ENCODE measurements at regions of chr7 and their contacts with region 1.

Region 1: DNA sequence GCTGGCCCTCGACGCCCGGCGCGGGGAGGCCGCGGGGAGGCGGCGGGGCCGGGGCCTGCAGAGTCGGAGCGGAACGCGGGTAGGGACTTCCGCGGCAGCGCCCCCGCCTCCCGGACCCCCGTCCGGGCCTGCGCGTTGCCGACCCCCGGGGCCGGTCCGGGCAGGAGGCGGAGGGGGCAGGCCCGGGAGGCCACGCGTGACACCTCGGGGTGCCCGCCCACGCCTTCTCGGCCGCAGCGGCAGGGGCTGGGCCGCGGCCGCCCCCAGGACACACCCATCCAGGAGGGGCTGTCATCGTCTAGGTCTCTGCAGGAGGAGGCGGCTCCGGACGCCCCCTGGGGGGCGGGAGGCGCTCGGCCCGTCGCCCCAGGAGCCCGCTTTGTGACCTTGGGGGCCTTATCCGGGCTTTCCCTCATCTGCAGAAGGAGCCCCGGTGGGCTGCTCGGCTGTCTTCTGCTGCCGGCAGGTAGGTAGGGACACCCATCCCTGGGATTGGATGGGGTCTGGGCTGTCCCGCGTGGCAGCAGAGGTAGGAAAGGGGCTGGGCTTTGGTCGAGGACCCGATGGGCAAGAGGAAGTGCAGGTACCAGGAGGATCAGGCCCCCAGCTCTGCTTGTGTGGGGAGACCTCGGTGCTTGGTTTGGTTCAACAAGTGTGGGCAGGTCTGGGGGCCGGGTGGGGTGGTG is 569 bp downstream of the ZNF316 start:
- DNase-seq: peak; percentile 86
- H3K4me3 Mint-ChIP-seq: peak overlapping the region; percentile 92
- H3K27ac Mint-ChIP-seq: peak overlapping the region; percentile 84
- H3K4me1 Mint-ChIP-seq: peaks cover 25% of the 10 kb centered on the region
- H3K27me3 Mint-ChIP-seq: no peaks in the 10 kb centered on the region

Region 2: GRCh38 chr7:6577365-6578113 is 60.1 kb before region 1 on chr7 and contains the start of gene ZDHHC4:
- intact Hi-C with region 1: loop called (anchors 5 kb)
- DNase-seq: peak; percentile 96
- H3K4me3 Mint-ChIP-seq: peak within 1 kb of the TSS; percentile 84
- H3K27ac Mint-ChIP-seq: peak within 1 kb of the TSS; percentile 90
- H3K4me1 Mint-ChIP-seq: peaks cover 18% of the 10 kb centered on the region
- H3K27me3 Mint-ChIP-seq: peaks cover 3% of the 10 kb centered on the region
- total RNA-seq, gene ZDHHC4: 26.7 and 28.3 TPM in 2 replicates

Region 3: DNA sequence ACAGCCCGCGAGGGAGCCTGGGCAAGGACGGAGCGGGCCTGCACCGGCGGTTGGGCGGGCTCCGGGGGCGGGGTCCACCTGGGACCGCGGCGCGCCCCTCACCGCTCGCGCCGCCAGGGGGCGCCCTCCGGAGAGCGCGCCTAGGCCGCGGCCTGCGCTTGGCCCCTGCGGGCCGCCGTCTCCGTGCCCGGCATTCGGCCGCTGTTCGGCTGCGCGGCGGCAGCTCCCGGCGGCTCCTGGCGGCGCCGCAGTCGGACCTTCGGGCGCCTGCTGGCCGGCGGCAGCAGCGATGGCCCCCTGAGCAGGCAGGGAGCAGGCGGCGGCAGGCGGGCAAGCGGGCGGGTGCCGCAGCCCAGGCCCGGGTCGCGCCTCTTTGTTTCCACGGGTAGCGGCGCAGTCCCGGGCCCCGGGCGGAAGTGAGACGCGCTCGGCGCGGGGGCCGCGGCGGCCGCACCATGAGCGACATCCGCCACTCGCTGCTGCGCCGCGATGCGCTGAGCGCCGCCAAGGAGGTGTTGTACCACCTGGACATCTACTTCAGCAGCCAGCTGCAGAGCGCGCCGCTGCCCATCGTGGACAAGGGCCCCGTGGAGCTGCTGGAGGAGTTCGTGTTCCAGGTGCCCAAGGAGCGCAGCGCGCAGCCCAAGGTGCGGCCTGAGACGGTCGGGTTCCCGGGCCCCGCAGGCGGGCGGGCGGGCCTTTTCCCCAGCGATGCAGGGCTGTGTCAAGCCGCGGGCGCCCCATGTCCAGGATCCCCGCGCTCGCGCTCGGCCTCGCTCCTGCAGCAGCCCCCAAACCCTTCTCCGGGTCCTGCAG is 47.6 kb before region 1 on chr7 and contains the start of gene INTS15:
- intact Hi-C with region 1: loop called (anchors 2 kb)
- DNase-seq: peak; percentile 96
- H3K4me3 Mint-ChIP-seq: peak within 1 kb of the TSS; percentile 98
- H3K27ac Mint-ChIP-seq: peak within 1 kb of the TSS; percentile 94
- H3K4me1 Mint-ChIP-seq: peaks cover 19% of the 10 kb centered on the region
- H3K27me3 Mint-ChIP-seq: no peaks in the 10 kb centered on the region
- total RNA-seq, gene INTS15: 42.5 and 45.1 TPM in 2 replicates

Region 4: DNA sequence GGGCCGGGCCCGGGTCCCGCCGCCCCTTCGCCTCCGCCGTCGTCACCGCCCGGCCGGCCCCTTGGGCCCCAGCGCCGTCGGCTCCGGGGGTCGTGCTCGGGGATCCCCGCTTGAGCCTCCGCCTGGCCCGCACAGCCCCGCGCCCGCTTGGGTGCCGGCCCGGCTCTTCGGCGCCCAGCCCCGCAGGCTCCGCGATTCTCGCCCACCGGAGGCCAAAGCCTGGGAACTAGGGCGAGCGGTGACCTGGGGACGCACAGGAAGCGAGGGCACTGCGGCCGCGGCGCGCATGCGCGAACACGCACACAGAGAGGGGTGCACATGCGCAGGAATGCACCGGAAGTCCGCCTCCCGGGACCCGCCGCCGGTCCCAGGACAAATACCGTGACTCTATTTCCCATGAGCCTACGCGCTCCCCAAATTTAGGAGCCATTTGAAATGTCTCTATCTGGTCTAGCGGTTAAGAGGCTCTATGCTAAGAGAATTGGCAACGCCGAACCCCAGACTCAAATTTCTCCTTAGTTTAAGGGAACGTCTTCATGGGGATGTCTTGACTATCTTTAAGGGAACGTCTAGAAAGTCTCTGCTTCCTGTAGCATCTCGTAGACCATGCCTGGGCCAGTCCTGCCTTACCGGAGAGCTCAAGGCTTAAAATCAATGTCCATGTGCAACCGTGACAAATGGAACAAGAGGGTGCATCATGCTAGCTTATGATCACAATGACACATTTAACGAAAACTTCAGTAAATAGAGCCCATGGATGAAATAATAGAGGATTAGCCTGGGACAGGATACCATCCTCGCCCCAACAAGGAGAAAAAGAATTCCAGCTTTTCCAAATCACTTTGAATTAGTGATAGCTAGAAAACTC is 69.2 kb after region 1 on chr7 and contains the start of gene ZNF12:
- intact Hi-C with region 1: loop called (anchors 2 kb)
- DNase-seq: peak; percentile 98
- H3K4me3 Mint-ChIP-seq: peak within 1 kb of the TSS; percentile 96
- H3K27ac Mint-ChIP-seq: peak within 1 kb of the TSS; percentile 91
- H3K4me1 Mint-ChIP-seq: peaks cover 31% of the 10 kb centered on the region
- H3K27me3 Mint-ChIP-seq: no peaks in the 10 kb centered on the region
- total RNA-seq, gene ZNF12: 17.9 and 22.8 TPM in 2 replicates

Measured in activated CD4-positive, alpha-beta T cell treated with anti-CD3 and anti-CD28 coated beads, Interleukin-2, amount 10 ng/mL, durations not matched to agents 24 days and 14 days (primary cell).